Spleen (tissue), 13 donors: ENCODE measurements at regions of chr1 and their contacts with region 1.

Region 1: DNA sequence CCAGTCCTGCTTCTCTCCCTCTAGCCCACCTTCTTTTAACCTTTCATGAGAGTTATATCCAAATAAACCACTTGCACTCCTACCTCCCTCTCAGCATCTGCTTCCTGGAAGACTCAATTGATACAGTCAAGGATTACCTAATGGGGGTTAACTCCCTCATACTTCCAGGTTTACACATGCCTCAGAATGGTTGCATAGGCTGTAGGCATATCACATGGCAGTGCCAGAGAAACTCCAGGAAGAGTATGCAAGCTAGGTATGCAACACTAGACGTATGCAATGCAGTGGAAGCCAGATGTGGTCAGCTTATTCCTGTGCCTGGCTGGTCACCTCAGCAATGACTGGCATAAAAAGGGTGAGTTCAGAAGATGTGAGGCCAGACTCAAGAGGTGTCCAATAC is 32.7 kb upstream of the VANGL1 start:
- DNase-seq: no peak
- H3K4me3 ChIP-seq: no peak overlapping the region
- H3K27ac ChIP-seq: no peak overlapping the region
- H3K4me1 ChIP-seq: no peaks in the 10 kb centered on the region
- H3K27me3 ChIP-seq: peaks cover 0 to 4% (median 0%) of the 10 kb centered on the region in 7 donors
- CTCF ChIP-seq: no peak
- POLR2A ChIP-seq: no peak

Region 2: DNA sequence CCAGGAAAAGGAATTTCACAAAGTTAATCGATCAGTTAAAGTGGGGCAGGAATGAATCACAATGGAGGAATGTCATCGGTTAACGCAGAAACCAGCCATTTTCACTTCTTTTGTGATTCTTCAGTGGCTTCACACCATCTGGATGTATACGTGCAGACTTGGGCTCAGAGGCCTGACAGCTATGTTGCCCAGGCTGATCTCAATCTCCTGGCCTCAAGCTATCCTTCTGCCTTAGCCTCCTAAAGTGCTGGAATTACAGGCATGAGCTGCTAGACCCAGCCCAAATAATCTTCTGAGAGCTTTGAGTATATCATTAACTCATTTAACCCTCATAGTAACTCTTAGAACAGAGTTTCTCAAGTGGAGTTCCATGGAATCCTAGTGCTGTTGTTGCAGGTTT is 93.8 kb before region 1 on chr1:
- intact Hi-C with region 1: no loop called
- DNase-seq: no peak
- H3K4me3 ChIP-seq: no peak overlapping the region
- H3K27ac ChIP-seq: no peak overlapping the region
- H3K4me1 ChIP-seq: no peaks in the 10 kb centered on the region
- H3K27me3 ChIP-seq: no peaks in the 10 kb centered on the region
- CTCF ChIP-seq: no peak
- POLR2A ChIP-seq: no peak

Region 3: DNA sequence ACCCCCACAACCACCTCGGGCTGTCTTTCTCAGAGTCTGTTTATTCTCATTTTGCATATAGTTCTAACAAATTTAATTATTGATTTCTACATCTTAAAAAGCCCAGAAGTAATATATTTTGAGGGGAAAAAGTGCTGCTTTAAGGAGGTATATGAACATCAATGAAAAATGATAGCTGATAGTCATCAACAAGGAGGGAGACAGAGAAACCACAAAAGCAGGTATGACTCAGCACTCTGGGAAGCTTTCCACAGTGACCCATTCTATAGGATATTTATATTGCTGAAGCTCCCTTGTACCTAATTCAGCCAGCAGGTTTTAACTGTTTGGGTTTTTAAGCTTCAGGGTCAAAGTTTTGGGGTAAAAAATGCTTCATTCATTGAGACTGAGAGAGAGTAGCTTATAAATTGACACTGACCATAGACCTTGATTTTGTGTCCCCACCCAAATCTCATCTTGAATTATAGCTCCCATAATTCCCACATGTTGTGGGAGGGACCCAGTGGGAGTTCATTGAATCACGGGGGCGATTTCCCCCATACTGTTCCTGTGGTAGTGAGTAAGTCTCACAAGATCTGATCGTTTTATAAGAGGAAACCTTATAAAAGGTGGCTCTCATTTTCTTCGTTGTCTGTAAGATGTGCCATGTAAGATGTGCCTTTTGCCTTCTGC is 60.1 kb after region 1 on chr1:
- intact Hi-C with region 1: no loop called
- DNase-seq: no peak
- H3K4me3 ChIP-seq: no peak overlapping the region
- H3K27ac ChIP-seq: no peak overlapping the region
- H3K4me1 ChIP-seq: no peaks in the 10 kb centered on the region
- H3K27me3 ChIP-seq: no peaks in the 10 kb centered on the region
- CTCF ChIP-seq: no peak
- POLR2A ChIP-seq: no peak

Region 4: GRCh38 chr1:115706587-115707425 is 97.8 kb after region 1 on chr1:
- intact Hi-C with region 1: loop called (anchors 10 kb)
- DNase-seq: no peak
- H3K4me3 ChIP-seq: no peak overlapping the region
- H3K27ac ChIP-seq: no peak overlapping the region
- H3K4me1 ChIP-seq: no peaks in the 10 kb centered on the region
- H3K27me3 ChIP-seq: peaks cover 0 to 31% (median 0%) of the 10 kb centered on the region in 7 donors
- CTCF ChIP-seq: peak in 9 of 11 experiments; percentile 11 to 60 (median 51)
- POLR2A ChIP-seq: no peak

Region 5: GRCh38 chr1:115771847-115772457 is 162.9 kb after region 1 on chr1:
- intact Hi-C with region 1: loop called (anchors 5 kb)
- DNase-seq: no peak
- H3K4me3 ChIP-seq: no peak overlapping the region
- H3K27ac ChIP-seq: no peak overlapping the region
- H3K4me1 ChIP-seq: peaks cover 0 to 4% (median 0%) of the 10 kb centered on the region in 6 donors
- H3K27me3 ChIP-seq: peaks cover 0 to 20% (median 0%) of the 10 kb centered on the region in 7 donors
- CTCF ChIP-seq: peak in 10 of 11 experiments; percentile 26 to 70 (median 59)
- POLR2A ChIP-seq: no peak

Region 6: DNA sequence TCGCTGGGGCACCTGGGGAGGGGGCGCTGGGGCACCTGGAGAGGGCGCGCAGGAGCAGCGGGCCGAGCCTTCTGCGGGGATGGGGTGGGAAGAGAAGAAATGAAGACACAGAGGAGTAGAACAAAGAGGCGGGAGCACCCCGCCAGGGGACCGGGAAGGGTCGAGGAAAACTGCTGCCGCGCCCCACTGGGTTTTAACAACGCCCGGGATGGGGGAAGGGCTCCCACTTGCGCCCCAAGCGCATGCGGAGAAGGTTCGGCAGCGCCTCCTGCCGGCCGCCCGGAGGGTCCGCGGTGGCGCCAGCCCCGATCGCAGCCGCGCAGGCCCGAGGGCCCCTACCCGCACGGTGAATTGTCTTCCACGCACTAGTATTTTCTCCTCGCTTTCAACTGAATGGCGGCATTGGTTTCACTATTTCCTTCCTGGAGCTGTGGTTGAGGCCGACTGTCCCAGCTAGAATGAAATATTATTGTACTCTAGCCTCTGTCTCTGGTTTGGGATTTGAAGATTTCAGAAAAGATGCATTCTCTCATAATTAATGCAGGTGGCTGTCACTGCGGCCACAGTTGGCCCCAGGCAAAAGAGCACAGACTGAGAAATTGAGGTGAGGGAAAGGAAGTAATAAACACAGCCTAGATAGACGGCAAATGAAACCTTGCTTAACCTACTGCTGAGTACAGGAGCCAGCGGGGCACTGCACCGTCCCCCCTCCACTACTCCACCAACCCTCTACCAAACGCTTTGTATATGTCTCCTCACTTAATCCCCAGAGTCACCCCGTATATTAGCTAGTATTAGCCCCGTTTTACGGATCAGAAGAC is 559.5 kb after region 1 on chr1:
- intact Hi-C with region 1: no loop called
- DNase-seq: peak; percentile 95
- H3K4me3 ChIP-seq: peak overlapping the region; percentile 44 to 74 (median 51)
- H3K27ac ChIP-seq: peak overlapping the region in 7 of 8 donors; percentile 2 to 70 (median 51)
- H3K4me1 ChIP-seq: peaks cover 0 to 29% (median 19%) of the 10 kb centered on the region in 6 donors
- H3K27me3 ChIP-seq: peaks cover 0 to 11% (median 0%) of the 10 kb centered on the region in 7 donors
- CTCF ChIP-seq: peak; percentile 33 to 98 (median 94)
- POLR2A ChIP-seq: no peak